ENCODE measurements at regions of chrX and their contacts with region 1.

Region 1: GRCh38 chrX:37942170-37942569 is 64.2 kb upstream of the SYTL5 start:
- DNase-seq: no peak
- H3K4me3 ChIP-seq: no peak overlapping the region
- H3K27ac ChIP-seq: no peak overlapping the region
- H3K4me1 ChIP-seq: no peaks in the 10 kb centered on the region
- H3K27me3 ChIP-seq: peaks cover 6% of the 10 kb centered on the region; the same call in 1 of the 2 replicates
- CTCF ChIP-seq: no peak
- EP300 ChIP-seq: no peak
- RAD21 ChIP-seq: no peak

Region 2: DNA sequence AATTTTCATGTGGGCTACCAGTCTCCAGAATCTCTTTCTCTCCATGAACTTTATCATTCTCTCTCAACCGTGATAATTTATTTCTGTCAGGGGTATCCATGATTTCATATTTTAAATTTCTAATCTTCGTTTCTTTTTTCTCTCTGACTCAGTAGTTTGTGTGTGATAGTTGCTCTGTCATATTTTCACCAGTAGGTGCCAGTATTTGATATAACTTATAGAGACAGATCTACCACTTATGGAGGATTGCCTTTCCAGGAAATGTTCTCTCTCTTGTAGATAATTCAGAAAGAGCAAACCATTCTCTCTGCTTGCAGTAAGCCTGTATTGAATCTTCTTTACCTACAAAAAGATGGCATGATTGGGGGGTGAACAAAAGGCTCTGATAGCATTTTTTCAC is 15.5 kb before region 1 on chrX:
- CTCF ChIA-PET with region 1: interaction called, 12 read pairs
- POLR2A ChIA-PET with region 1: no interaction called
- DNase-seq: peak; percentile 8
- H3K4me3 ChIP-seq: no peak overlapping the region
- H3K27ac ChIP-seq: no peak overlapping the region
- H3K4me1 ChIP-seq: no peaks in the 10 kb centered on the region
- H3K27me3 ChIP-seq: no peaks in the 10 kb centered on the region
- CTCF ChIP-seq: peak; percentile 76
- EP300 ChIP-seq: no peak
- RAD21 ChIP-seq: peak; percentile 65

Region 3: GRCh38 chrX:38275615-38276014 is 333.4 kb after region 1 on chrX:
- CTCF ChIA-PET with region 1: no interaction called
- POLR2A ChIA-PET with region 1: no interaction called
- DNase-seq: no peak
- H3K4me3 ChIP-seq: no peak overlapping the region
- H3K27ac ChIP-seq: peak overlapping the region in 1 of 2 experiments; percentile 66; a peak in 2 of 4 replicates
- H3K4me1 ChIP-seq: no peaks in the 10 kb centered on the region; a peak in 1 of 4 replicates
- H3K27me3 ChIP-seq: no peaks in the 10 kb centered on the region; the same call in 1 of the 2 replicates
- CTCF ChIP-seq: no peak
- EP300 ChIP-seq: no peak
- RAD21 ChIP-seq: no peak

Measured in SK-N-SH (cell line).